ENCODE measurements at regions of chr4 and their contacts with region 1.

Region 1: GRCh38 chr4:15533817-15534216 is 64.1 kb downstream of the CC2D2A start:
- DNase-seq: no peak
- ATAC-seq: no peak

Region 2: GRCh38 chr4:15507679-15508078 is 26.1 kb before region 1 on chr4:
- intact Hi-C with region 1: loop called (anchors 1 kb)
- DNase-seq: no peak
- ATAC-seq: no peak